ENCODE measurements at regions of chr3 and their contacts with region 1.

Region 1: DNA sequence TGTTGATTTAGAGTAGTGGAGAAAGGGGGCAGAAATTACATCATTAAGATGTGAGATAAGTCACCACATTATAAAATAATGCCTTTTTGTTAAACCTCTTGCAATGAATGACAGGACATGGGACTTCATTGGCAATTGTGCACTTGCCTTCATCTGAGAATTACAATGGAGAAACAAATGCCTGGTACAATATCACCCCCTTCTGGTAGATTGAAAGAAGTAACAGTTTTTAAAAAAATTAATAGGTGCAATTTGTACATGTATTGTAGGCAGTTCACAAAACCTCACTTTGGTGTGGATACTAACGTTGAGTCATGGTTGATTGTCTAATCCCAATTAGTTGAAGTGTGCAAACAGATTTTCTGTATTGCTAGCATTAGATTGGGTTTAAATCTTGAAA is 4.6 kb upstream of the P2RY14 start:
- DNase-seq: no peak
- H3K4me3 ChIP-seq: no peak overlapping the region
- H3K27ac ChIP-seq: peak overlapping the region in 2 of 4 donors; percentile 40 to 65
- H3K4me1 ChIP-seq: peaks cover 0 to 40% (median 15%) of the 10 kb centered on the region in 4 donors
- H3K27me3 ChIP-seq: no peaks in the 10 kb centered on the region
- CTCF ChIP-seq: peak; percentile 48 to 70 (median 58)
- EP300 ChIP-seq: no peak
- POLR2A ChIP-seq: no peak

Region 2: DNA sequence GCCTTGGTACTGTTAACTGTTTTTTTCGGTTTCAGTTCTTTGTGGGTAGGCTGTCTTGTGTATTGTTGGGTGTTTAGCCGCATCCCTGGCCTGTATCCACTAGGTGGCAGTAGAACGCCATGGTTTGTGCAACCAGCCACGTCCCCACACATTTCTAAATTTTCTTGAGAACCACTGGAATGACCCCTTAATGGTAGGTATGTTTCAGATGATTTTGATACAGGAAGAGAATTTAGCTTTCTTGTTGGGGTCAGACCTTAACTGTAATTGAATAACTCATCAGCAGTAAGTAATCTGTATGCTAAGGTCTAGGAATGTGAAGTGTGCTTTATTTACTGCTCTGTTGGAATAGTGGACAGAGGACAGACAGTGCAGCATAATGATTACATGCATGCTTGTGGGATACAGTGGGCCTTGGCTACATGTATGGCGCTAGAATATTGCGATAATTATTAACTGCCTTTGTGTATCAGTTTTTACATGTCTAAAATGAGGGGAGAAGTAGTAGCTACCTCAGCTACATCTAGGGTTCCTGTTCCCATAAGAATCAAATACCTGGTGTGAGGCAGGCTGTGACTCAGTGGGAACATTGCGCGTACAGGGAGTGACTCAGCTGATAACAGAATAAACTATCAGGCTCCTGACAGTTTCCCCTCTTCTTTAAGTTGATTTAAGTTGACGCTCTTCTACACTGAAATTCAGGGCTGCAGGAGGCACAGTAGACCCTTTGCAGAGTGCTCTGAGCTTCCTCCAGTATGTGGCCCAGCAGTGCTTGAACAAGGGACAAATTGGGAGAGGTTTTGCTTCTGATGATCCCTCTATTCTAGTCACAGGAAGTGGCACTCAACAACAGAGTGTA is 54.9 kb before region 1 on chr3:
- intact Hi-C with region 1: loop called (anchors 1 kb)
- DNase-seq: peak; percentile 84
- H3K4me3 ChIP-seq: no peak overlapping the region
- H3K27ac ChIP-seq: peak overlapping the region; percentile 29 to 62 (median 52)
- H3K4me1 ChIP-seq: peaks cover 0 to 32% (median 18%) of the 10 kb centered on the region in 4 donors
- H3K27me3 ChIP-seq: no peaks in the 10 kb centered on the region
- CTCF ChIP-seq: peak; percentile 79 to 96 (median 84)
- EP300 ChIP-seq: no peak
- POLR2A ChIP-seq: no peak

Region 3: GRCh38 chr3:151234825-151235224 is 48.1 kb before region 1 on chr3:
- intact Hi-C with region 1: loop called (anchors 2 kb)
- DNase-seq: no peak
- H3K4me3 ChIP-seq: no peak overlapping the region
- H3K27ac ChIP-seq: peak overlapping the region in 3 of 4 donors; percentile 50 to 61 (median 53)
- H3K4me1 ChIP-seq: peaks cover 0 to 41% (median 21%) of the 10 kb centered on the region in 4 donors
- H3K27me3 ChIP-seq: no peaks in the 10 kb centered on the region
- CTCF ChIP-seq: no peak
- EP300 ChIP-seq: no peak
- POLR2A ChIP-seq: no peak

Region 4: DNA sequence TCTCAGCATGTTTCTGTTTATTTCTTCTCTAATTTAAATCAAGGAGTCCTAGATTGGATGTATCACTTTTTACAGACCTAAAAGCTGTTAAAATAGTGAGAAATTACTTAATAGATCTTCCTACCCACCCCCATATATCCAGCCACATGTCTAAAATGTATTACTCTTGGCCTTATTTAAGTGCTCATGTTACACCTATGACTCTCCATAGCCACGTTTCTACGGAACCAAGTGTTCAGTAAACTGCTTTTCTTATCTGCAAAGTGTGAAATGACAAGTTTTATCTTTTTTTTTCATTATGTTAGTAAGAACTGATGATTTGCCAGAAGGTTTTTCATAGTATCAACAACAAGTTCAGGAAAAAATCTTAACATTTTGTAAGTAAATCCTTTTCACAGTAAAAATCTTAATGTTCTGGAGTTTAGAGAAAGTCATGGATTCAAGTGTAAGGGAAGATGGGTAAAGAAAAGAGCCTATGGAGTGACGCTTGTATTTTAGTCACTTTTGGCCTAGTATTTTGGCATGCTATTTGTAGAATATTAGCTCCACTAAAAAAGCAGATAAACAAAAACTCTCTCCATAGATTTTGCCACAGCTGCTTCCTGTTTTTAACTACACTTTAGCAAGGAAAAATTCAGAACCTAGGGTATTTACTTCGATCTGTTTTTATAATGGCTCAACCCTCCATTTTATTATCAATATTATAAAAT is 219.2 kb after region 1 on chr3:
- intact Hi-C with region 1: no loop called
- DNase-seq: no peak
- H3K4me3 ChIP-seq: no peak overlapping the region
- H3K27ac ChIP-seq: peak overlapping the region in 2 of 4 donors; percentile 9 to 22
- H3K4me1 ChIP-seq: no peaks in the 10 kb centered on the region
- H3K27me3 ChIP-seq: no peaks in the 10 kb centered on the region
- CTCF ChIP-seq: no peak
- EP300 ChIP-seq: no peak
- POLR2A ChIP-seq: no peak

Measured in sigmoid colon (tissue), 7 donors.